ENCODE measurements at regions of chr11 and their contacts with region 1.

Region 1: DNA sequence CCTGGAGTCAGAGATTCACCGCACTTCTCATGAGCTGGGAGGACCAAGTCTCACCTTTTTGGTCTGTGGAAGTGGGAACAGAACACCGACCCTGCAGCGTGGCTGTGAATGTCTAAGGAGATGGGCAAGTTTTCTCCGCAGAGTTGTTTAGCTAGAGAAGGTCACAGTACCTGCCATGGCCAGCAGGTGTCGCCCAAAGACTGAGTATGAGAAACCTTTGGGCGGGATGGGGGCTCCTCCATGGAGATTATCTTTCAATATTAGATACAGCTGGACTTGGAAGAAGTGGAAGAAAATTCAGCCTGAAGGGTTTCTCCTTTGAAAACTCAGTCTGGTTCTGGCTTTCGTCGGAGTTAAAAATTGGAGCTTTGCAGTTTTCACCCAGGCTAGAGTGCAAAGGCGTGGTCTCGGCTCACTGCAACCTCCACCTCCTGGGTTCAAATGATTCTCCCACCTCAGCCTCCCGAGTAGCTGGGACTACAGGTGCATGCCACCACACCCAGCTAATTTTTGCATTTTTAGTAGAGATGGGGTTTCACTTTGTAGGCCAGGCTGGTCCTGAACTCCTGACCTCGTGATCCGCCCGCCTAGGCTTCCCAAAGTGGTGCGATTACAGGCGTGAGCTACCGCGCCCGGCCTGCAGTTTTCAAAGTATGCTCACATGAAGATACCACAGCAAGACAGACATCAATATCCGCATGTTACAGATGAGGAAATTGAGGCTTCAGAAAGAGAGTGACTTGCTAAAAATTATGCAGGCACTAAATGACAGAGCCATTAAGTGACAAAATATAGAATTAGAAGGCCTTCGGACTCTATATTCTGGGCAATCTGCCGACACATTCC is 10.7 kb upstream of the DSCAML1 start:
- H3K4me3 ChIP-seq: no peak overlapping the region
- H3K27ac ChIP-seq: no peak overlapping the region
- H3K4me1 ChIP-seq: no peaks in the 10 kb centered on the region
- CTCF ChIP-seq: peak; percentile 48; the same call in 1 of the 2 replicates

Region 2: GRCh38 chr11:117443266-117444195 is 364.2 kb before region 1 on chr11:
- CTCF ChIA-PET with region 1: interaction called, 16 read pairs
- POLR2A ChIA-PET with region 1: no interaction called
- H3K4me3 ChIP-seq: no peak overlapping the region
- H3K27ac ChIP-seq: no peak overlapping the region
- H3K4me1 ChIP-seq: no peaks in the 10 kb centered on the region
- CTCF ChIP-seq: no peak

Region 3: DNA sequence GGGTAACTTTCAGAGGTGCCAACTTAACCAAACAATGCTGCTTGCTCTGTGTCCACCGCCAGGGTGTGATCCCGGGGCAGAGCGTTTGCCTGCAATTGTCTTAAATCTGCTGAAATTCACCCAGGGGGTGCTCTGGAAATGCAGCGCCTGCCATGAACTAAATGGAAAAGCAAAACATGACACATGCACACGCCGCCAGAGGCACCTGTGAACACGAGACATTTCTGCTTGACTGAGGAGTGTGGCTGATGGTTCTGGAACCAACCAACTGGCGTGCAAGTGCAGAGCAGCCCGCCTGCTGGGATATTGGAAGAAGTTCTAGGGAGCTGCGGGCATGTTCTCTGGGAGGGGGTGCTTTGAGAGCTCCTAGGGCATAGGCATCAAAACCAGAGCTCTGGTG is 41.1 kb before region 1 on chr11:
- CTCF ChIA-PET with region 1: no interaction called
- POLR2A ChIA-PET with region 1: no interaction called
- H3K4me3 ChIP-seq: no peak overlapping the region
- H3K27ac ChIP-seq: no peak overlapping the region
- H3K4me1 ChIP-seq: no peaks in the 10 kb centered on the region
- CTCF ChIP-seq: no peak

Region 4: GRCh38 chr11:117796872-117797529 is 10.7 kb before region 1 on chr11 and contains the start of gene DSCAML1:
- CTCF ChIA-PET with region 1: interaction called, 32 read pairs
- POLR2A ChIA-PET with region 1: interaction called, 3 read pairs
- H3K4me3 ChIP-seq: peak within 1 kb of the TSS; percentile 28
- H3K27ac ChIP-seq: no peak within 1 kb of the TSS
- H3K4me1 ChIP-seq: no peaks in the 10 kb centered on the region
- CTCF ChIP-seq: no peak

Region 5: GRCh38 chr11:117828611-117829368 is 21.1 kb after region 1 on chr11:
- CTCF ChIA-PET with region 1: interaction called, 17 read pairs
- POLR2A ChIA-PET with region 1: no interaction called
- H3K4me3 ChIP-seq: no peak overlapping the region
- H3K27ac ChIP-seq: no peak overlapping the region
- H3K4me1 ChIP-seq: no peaks in the 10 kb centered on the region
- CTCF ChIP-seq: no peak

Region 6: DNA sequence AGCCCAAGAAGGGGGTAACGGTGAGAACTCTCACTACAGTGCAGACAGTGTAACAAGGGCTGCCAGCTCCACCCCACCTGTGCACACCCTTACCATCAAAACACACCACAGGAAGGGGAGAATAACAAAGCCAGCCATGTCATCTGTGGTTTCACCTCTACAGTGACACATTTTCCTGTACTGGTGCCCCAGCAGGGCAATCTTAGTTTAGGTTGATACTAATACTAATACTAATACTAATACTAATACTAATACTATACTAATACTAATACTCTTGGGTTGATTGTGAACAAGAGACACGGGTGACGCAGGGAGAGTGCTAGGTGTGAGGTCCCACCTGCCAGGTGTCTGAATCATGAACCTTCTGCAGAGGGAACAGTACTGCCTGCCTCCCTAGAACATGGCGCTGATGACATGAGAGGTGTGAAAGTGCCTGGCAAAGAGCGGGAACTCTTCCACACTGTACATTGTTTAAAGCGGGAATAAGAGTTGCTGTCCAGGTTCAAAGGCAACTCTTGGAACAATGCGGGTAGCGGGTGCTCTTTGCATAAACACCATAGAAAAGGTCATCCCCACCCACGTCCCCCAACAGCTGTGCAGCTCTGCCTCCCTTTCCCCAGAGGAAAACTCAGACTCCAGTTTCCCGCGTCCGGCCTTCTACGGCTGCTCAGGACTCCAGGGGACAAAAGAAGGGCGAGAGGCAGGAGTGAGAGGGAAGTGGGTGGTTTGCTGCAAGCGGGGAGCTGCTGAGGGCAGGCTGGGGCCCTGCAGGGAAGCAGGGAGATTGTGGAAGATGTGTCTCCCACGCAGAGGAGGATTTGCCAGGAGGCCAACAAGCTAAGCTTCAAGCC is 244.1 kb after region 1 on chr11:
- CTCF ChIA-PET with region 1: interaction called, 26 read pairs
- POLR2A ChIA-PET with region 1: no interaction called
- H3K4me3 ChIP-seq: no peak overlapping the region
- H3K27ac ChIP-seq: no peak overlapping the region
- H3K4me1 ChIP-seq: no peaks in the 10 kb centered on the region
- CTCF ChIP-seq: no peak